Mammary epithelial cell (primary cell): ENCODE measurements at regions of chr1 and their contacts with region 1.

Region 1: GRCh38 chr1:236345728-236346127 is 48.4 kb upstream of the EDARADD start:
- DNase-seq: no peak
- H3K4me3 ChIP-seq: no peak overlapping the region
- H3K27ac ChIP-seq: no peak overlapping the region
- H3K4me1 ChIP-seq: no peaks in the 10 kb centered on the region
- H3K27me3 ChIP-seq: no peaks in the 10 kb centered on the region
- CTCF ChIP-seq: no peak

Region 2: DNA sequence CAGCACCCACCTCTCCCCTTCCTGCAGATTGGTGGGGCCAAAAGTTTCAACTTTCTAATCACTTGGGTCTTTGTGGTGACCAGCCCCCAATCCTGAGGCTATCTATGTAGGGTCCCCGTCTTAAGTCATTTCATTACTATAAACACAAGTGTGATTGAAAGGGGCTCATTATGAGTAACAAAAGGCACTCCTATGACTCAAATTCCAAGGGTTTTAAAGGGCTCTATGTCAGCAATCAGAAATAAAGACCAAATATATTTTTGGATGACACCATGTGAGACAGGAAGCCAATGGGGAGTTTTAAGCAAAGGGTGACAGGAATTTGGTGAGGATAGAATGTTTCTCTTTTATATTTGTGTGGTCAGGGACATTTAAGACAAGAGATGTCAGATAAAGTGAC is 70.1 kb before region 1 on chr1:
- CTCF ChIA-PET with region 1: no interaction called
- dilution Hi-C with region 1: loop called (anchors 5 kb)
- in situ Hi-C with region 1: no loop called
- intact Hi-C with region 1: no loop called
- DNase-seq: no peak
- H3K4me3 ChIP-seq: no peak overlapping the region
- H3K27ac ChIP-seq: no peak overlapping the region
- H3K4me1 ChIP-seq: no peaks in the 10 kb centered on the region
- H3K27me3 ChIP-seq: no peaks in the 10 kb centered on the region
- CTCF ChIP-seq: no peak